Mammary epithelial cell (primary cell): ENCODE measurements at regions of chr13 and their contacts with region 1.

Region 1: DNA sequence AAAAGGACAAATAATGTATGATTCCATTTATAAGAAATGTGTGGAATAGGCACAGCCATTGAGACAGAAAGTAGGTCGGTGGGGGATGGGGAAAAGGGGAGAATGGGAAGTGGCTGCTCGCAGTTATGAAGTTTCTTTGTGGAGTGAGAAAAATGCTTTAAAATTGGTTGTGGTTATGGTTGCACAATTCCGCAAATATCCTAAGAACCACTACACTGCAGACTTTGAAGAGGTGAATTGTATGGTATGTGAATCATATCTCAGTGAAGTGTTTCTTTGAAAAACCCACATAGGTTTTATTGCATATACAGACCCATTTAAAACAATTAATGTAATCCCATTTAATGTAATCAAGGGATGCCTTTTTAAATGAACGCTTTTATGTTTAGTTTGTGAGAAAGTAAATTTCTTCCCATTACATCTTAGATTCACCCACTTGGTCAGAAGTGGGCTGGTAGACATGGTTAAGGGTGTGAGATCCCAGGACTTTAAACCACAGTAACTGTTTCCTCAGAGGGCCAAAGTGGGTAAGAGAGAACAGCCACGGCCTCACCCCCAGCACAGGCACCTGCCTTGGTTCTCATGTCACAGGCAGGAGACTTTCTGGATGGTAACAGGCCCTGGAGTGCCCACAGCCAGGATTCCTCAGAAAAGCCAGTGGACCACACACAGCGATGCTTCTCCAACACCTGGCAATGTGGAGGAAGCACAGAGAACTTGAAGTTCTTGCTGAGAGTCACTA is 119.3 kb upstream of the GJB6 start:
- DNase-seq: peak; percentile 91
- H3K4me3 ChIP-seq: peak overlapping the region in 1 of 3 experiments; percentile 0
- H3K27ac ChIP-seq: peak overlapping the region; percentile 90
- H3K4me1 ChIP-seq: peaks cover 42% of the 10 kb centered on the region
- H3K27me3 ChIP-seq: no peaks in the 10 kb centered on the region
- CTCF ChIP-seq: no peak

Region 2: GRCh38 chr13:20301403-20302071 is 49.9 kb before region 1 on chr13:
- CTCF ChIA-PET with region 1: no interaction called
- dilution Hi-C with region 1: no loop called
- in situ Hi-C with region 1: no loop called
- intact Hi-C with region 1: loop called (anchors 2 kb)
- DNase-seq: no peak
- H3K4me3 ChIP-seq: no peak overlapping the region
- H3K27ac ChIP-seq: no peak overlapping the region
- H3K4me1 ChIP-seq: peaks cover 21% of the 10 kb centered on the region
- H3K27me3 ChIP-seq: no peaks in the 10 kb centered on the region
- CTCF ChIP-seq: no peak

Region 3: DNA sequence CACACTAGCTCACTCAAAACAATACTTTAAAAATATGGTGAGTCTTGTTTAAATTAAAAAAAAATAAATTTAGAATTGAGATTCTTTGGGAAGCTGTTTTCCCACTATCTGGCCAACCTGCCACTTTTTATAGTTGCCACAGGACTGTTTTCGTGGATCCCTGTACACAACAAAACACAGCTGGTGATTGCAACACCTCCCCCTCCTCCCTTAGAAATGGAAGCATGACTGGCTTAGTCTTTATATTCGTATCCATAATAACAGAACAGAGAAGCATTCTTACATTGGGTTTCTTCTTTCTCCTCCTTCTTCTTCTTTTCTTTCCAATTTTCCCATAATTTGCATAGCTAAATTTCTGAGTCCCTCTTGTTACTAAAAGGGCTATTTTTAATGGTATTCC is 39.9 kb before region 1 on chr13:
- CTCF ChIA-PET with region 1: no interaction called
- dilution Hi-C with region 1: loop called (anchors 5 kb)
- in situ Hi-C with region 1: no loop called
- intact Hi-C with region 1: no loop called
- DNase-seq: no peak
- H3K4me3 ChIP-seq: no peak overlapping the region
- H3K27ac ChIP-seq: no peak overlapping the region
- H3K4me1 ChIP-seq: no peaks in the 10 kb centered on the region
- H3K27me3 ChIP-seq: no peaks in the 10 kb centered on the region
- CTCF ChIP-seq: no peak

Region 4: GRCh38 chr13:20418953-20419352 is 67.5 kb after region 1 on chr13:
- CTCF ChIA-PET with region 1: no interaction called
- dilution Hi-C with region 1: no loop called
- in situ Hi-C with region 1: no loop called
- intact Hi-C with region 1: loop called (anchors 2 kb)
- DNase-seq: no peak
- H3K4me3 ChIP-seq: no peak overlapping the region
- H3K27ac ChIP-seq: peak overlapping the region; percentile 56
- H3K4me1 ChIP-seq: peaks cover 7% of the 10 kb centered on the region
- H3K27me3 ChIP-seq: no peaks in the 10 kb centered on the region
- CTCF ChIP-seq: no peak

Region 5: DNA sequence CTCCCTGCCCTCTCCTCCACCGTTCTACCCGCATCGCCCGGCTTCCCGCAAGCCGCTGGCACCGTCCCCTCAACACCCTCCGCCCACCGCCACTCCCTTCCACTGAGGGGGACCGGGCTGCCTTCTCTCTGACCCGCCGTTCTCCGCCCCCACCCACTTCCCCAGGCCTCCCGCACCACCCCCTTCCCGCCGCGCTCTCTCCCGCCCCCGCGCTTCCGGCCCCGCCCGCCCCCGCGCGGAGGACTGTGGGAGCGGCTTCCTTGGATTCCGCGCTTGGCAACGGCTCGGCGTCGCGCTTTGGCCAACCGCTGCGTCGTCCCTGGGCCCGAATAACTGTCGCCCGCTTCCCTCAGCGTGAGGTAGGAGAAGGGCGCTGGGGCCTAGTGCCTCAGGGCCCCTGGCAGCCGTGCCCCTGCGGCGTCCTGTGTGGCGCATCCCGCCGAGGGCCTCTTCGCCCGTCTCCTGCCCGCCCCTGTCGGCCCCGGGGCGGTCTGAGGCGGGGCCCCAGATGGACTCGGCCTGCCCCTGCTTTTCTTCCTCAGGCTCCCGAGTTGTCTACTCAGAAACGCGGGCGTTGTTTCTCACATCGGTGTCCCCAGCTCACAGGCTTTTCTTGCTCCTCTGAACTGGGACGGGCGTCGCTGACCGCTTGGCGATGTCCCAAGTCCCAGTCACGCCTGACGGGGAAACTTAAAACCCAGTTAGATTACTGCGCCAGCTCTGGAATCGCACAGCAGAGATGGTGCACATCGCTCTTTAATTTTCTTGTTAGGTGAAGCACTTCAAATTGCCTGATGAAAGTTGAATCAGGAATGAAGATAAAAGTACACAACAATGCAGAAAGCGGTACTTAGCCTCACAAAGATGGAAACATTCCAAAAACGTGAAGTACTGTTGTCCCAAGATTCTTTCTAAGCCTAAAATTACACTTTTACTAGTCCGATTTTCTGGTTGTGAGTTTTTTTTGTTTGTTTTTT is 215.7 kb after region 1 on chr13 and contains the start of gene IFT88:
- CTCF ChIA-PET with region 1: no interaction called
- dilution Hi-C with region 1: no loop called
- in situ Hi-C with region 1: no loop called
- intact Hi-C with region 1: no loop called
- DNase-seq: peak; percentile 83
- H3K4me3 ChIP-seq: peak within 1 kb of the TSS; percentile 71 to 89 (median 89)
- H3K27ac ChIP-seq: peak within 1 kb of the TSS; percentile 89
- H3K4me1 ChIP-seq: peaks cover 8% of the 10 kb centered on the region
- H3K27me3 ChIP-seq: no peaks in the 10 kb centered on the region
- CTCF ChIP-seq: no peak
- total RNA-seq, gene IFT88: 10.3 to 11.2 TPM